B cell (primary cell): ENCODE measurements at regions of chr6 and their contacts with region 1.

Region 1: GRCh38 chr6:26156076-26156849 is 69.0 kb downstream of the HFE start:
- DNase-seq: peak; percentile 95
- ATAC-seq: peak; percentile 58
- H3K4me3 ChIP-seq: peak overlapping the region; percentile 75 to 95 (median 93)
- H3K4me3 Mint-ChIP-seq: peak overlapping the region; percentile 89
- H3K27ac ChIP-seq: peak overlapping the region; percentile 87 to 88
- H3K27ac Mint-ChIP-seq: peak overlapping the region; percentile 96
- H3K4me1 ChIP-seq: peaks cover 23 to 32% of the 10 kb centered on the region in 2 donors
- H3K4me1 Mint-ChIP-seq: peaks cover 34% of the 10 kb centered on the region
- H3K27me3 ChIP-seq: no peaks in the 10 kb centered on the region
- H3K27me3 Mint-ChIP-seq: no peaks in the 10 kb centered on the region
- CTCF ChIP-seq: no peak

Region 2: DNA sequence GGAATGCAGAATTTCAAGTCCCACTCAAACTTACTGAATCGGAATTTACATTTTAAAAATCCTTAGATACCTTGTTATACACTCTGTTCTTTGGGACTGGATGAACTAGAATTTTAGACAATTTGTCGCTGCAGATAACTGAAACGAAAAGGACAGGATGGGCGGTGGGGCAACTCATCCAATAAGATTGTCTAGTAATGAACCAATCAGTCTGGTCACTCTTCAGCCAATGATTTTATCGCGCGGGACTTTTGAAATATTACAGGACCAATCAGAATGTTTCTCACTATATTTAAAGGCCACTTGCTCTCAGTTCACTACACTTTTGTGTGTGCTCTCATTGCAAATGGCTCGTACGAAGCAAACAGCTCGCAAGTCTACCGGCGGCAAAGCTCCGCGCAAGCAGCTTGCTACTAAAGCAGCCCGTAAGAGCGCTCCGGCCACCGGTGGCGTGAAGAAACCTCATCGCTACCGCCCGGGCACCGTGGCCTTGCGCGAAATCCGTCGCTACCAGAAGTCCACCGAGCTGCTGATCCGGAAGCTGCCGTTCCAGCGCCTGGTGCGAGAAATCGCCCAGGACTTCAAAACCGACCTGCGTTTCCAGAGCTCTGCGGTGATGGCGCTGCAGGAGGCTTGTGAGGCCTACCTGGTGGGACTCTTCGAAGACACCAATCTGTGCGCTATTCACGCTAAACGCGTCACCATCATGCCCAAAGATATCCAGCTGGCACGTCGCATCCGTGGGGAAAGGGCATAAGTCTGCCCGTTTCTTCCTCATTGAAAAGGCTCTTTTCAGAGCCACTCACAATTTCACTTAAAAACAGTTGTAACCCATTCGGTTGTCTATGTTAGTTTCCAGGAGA is 111.0 kb before region 1 on chr6:
- CTCF ChIA-PET with region 1: interaction called, 3 read pairs
- POLR2A ChIA-PET with region 1: interaction called, 45 read pairs
- intact Hi-C with region 1: no loop called
- DNase-seq: peak; percentile 90
- ATAC-seq: peak; percentile 58
- H3K4me3 ChIP-seq: peak overlapping the region; percentile 56 to 98 (median 69)
- H3K4me3 Mint-ChIP-seq: peak overlapping the region; percentile 87
- H3K27ac ChIP-seq: peak overlapping the region; percentile 85 to 89
- H3K27ac Mint-ChIP-seq: peak overlapping the region; percentile 99
- H3K4me1 ChIP-seq: peaks cover 14 to 29% of the 10 kb centered on the region in 2 donors
- H3K4me1 Mint-ChIP-seq: peaks cover 17% of the 10 kb centered on the region
- H3K27me3 ChIP-seq: no peaks in the 10 kb centered on the region
- H3K27me3 Mint-ChIP-seq: no peaks in the 10 kb centered on the region
- CTCF ChIP-seq: no peak

Region 3: DNA sequence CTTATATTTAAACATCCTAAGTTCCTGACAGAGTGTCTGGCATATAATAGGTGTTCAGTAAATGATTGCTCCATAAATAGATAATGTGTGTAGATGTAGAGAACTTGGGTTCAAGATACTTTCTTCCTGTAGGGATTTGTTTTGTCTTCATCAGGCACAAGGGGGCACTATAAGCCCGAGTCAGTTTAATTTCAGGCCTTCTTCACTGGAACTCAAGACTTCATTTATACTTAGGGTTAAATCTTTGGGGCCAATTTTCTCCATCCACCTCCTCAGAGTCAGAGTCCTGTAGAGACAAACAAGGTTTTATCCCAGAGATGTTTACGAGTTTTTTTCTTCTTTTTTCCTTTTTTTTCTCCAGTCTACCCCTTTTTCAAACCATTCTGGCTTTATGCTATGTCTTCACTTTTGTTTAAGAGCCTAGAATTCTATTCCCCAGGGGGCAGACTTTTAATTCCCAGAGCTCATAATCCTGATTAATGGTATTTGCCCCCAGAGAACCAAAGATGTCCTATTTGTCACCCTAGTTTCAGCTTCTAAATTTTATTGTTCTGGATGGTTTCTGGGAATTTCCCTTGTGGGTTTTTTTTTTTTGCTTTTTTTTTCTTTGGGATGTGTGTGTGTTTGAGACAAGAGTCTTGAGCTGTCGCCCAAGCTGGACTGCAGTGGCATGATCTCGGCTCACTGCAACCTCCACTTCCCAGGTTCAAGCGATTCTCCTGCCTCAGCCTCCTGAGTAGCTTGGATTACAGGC is 19.3 kb after region 1 on chr6:
- CTCF ChIA-PET with region 1: interaction called, 30 read pairs
- POLR2A ChIA-PET with region 1: interaction called, 168 read pairs
- intact Hi-C with region 1: loop called (anchors 1 kb)
- DNase-seq: peak; percentile 81
- ATAC-seq: no peak
- H3K4me3 ChIP-seq: no peak overlapping the region
- H3K4me3 Mint-ChIP-seq: peak overlapping the region; percentile 21
- H3K27ac ChIP-seq: no peak overlapping the region
- H3K27ac Mint-ChIP-seq: peak overlapping the region; percentile 85
- H3K4me1 ChIP-seq: peaks cover 21 to 26% of the 10 kb centered on the region in 2 donors
- H3K4me1 Mint-ChIP-seq: peaks cover 29% of the 10 kb centered on the region
- H3K27me3 ChIP-seq: no peaks in the 10 kb centered on the region
- H3K27me3 Mint-ChIP-seq: no peaks in the 10 kb centered on the region
- CTCF ChIP-seq: peak; percentile 93

Region 4: DNA sequence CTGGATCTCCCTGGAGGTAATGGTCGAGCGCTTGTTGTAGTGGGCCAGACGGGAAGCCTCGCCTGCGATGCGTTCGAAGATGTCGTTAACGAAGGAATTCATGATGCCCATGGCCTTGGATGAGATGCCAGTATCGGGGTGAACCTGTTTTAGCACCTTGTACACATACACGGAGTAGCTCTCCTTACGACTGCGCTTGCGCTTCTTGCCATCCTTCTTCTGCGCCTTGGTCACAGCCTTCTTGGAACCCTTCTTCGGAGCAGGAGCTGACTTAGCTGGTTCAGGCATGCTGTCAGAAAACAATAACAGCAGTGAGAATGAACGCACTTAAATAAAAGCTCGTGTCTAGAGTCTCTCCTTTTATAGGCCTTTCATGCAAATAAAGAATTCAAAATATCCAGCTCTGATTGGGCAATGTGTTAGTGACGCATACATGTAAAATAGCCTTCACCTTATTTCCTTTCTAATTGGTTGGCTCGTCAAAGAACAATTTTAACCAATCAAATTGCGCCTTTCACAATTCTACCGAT is 60.2 kb after region 1 on chr6:
- CTCF ChIA-PET with region 1: interaction called, 13 read pairs
- POLR2A ChIA-PET with region 1: interaction called, 98 read pairs
- intact Hi-C with region 1: loop called (anchors 1 kb)
- DNase-seq: peak; percentile 96
- ATAC-seq: peak; percentile 80
- H3K4me3 ChIP-seq: peak overlapping the region; percentile 70 to 93 (median 74)
- H3K4me3 Mint-ChIP-seq: no peak overlapping the region
- H3K27ac ChIP-seq: peak overlapping the region; percentile 81 to 82
- H3K27ac Mint-ChIP-seq: no peak overlapping the region
- H3K4me1 ChIP-seq: peaks cover 15 to 26% of the 10 kb centered on the region in 2 donors
- H3K4me1 Mint-ChIP-seq: peaks cover 19% of the 10 kb centered on the region
- H3K27me3 ChIP-seq: no peaks in the 10 kb centered on the region
- H3K27me3 Mint-ChIP-seq: no peaks in the 10 kb centered on the region
- CTCF ChIP-seq: no peak

Region 5: DNA sequence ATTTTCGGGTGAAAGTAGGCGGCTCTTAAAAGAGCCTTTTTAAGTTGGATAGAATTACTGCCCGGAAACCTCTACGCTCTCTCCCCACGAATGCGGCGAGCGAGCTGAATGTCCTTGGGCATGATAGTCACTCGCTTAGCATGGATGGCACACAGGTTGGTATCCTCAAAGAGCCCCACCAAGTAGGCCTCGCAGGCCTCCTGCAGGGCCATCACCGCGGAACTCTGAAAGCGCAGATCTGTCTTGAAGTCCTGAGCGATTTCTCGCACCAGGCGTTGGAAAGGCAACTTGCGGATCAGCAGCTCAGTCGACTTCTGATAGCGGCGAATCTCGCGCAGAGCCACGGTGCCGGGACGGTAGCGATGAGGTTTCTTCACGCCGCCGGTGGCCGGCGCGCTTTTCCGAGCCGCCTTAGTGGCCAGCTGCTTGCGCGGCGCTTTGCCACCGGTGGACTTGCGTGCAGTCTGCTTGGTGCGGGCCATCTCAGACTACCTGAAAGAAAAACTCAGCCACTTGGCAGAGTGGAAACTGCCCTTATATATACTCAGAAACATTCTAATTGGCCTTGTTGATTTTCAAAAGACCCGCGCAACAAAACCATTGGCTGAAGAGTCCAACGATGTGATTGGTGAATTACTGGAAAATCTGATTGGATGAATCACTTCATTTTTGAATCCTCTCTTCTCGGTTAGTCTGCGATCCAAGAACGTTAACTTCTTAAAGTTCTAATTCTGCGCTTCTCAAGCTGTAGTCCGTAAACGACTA is 114.8 kb after region 1 on chr6:
- CTCF ChIA-PET with region 1: no interaction called
- POLR2A ChIA-PET with region 1: interaction called, 56 read pairs
- intact Hi-C with region 1: loop called (anchors 1 kb)
- DNase-seq: peak; percentile 90
- ATAC-seq: peak; percentile 19
- H3K4me3 ChIP-seq: peak overlapping the region; percentile 63 to 88 (median 75)
- H3K4me3 Mint-ChIP-seq: no peak overlapping the region
- H3K27ac ChIP-seq: peak overlapping the region; percentile 79 to 86
- H3K27ac Mint-ChIP-seq: no peak overlapping the region
- H3K4me1 ChIP-seq: peaks cover 15 to 37% of the 10 kb centered on the region in 2 donors
- H3K4me1 Mint-ChIP-seq: peaks cover 20% of the 10 kb centered on the region
- H3K27me3 ChIP-seq: no peaks in the 10 kb centered on the region
- H3K27me3 Mint-ChIP-seq: no peaks in the 10 kb centered on the region
- CTCF ChIP-seq: no peak

Region 6: DNA sequence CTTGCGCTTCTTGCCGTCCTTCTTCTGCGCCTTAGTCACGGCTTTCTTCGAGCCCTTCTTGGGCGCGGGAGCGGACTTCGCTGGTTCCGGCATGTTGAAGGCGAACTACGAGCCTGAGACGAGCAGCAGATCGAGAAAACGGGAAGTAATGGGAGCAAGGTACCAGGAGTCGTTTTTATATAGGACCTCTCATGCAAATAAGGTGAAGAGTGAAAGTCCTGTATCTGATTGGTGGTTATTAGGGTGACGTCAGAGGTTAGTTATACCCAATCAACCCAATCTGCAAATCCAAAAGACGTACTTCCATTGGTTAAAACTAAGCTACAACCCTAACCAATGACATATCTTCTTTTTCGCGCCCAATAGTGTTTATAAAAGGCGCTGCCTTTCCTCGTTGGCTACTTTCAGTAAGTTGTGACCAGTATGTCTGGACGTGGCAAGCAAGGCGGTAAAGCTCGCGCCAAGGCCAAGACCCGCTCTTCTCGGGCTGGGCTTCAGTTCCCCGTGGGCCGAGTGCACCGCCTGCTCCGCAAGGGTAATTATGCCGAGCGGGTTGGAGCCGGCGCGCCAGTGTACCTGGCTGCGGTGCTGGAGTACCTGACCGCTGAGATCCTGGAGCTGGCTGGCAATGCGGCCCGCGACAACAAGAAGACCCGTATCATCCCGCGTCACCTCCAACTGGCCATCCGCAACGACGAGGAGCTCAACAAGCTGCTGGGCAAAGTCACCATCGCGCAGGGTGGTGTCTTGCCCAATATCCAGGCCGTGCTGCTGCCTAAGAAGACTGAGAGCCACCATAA is 990.6 kb after region 1 on chr6:
- CTCF ChIA-PET with region 1: no interaction called
- POLR2A ChIA-PET with region 1: interaction called, 52 read pairs
- intact Hi-C with region 1: loop called (anchors 2 kb)
- DNase-seq: peak; percentile 98
- ATAC-seq: peak; percentile 85
- H3K4me3 ChIP-seq: peak overlapping the region; percentile 72 to 100 (median 88)
- H3K4me3 Mint-ChIP-seq: no peak overlapping the region
- H3K27ac ChIP-seq: peak overlapping the region; percentile 76 to 92
- H3K27ac Mint-ChIP-seq: no peak overlapping the region
- H3K4me1 ChIP-seq: peaks cover 20 to 26% of the 10 kb centered on the region in 2 donors
- H3K4me1 Mint-ChIP-seq: peaks cover 17% of the 10 kb centered on the region
- H3K27me3 ChIP-seq: no peaks in the 10 kb centered on the region
- H3K27me3 Mint-ChIP-seq: no peaks in the 10 kb centered on the region
- CTCF ChIP-seq: no peak

Region 7: GRCh38 chr6:27871924-27872638 is 1715.8 kb after region 1 on chr6:
- CTCF ChIA-PET with region 1: no interaction called
- POLR2A ChIA-PET with region 1: interaction called, 30 read pairs
- intact Hi-C with region 1: no loop called
- DNase-seq: peak; percentile 98
- ATAC-seq: peak; percentile 76
- H3K4me3 ChIP-seq: peak overlapping the region; percentile 66 to 99 (median 76)
- H3K4me3 Mint-ChIP-seq: peak overlapping the region; percentile 84
- H3K27ac ChIP-seq: peak overlapping the region; percentile 79 to 88
- H3K27ac Mint-ChIP-seq: peak overlapping the region; percentile 98
- H3K4me1 ChIP-seq: peaks cover 20 to 34% of the 10 kb centered on the region in 2 donors
- H3K4me1 Mint-ChIP-seq: peaks cover 30% of the 10 kb centered on the region
- H3K27me3 ChIP-seq: no peaks in the 10 kb centered on the region
- H3K27me3 Mint-ChIP-seq: no peaks in the 10 kb centered on the region
- CTCF ChIP-seq: peak; percentile 56